ENCODE measurements at regions of chr1 and their contacts with region 1.

Region 1: DNA sequence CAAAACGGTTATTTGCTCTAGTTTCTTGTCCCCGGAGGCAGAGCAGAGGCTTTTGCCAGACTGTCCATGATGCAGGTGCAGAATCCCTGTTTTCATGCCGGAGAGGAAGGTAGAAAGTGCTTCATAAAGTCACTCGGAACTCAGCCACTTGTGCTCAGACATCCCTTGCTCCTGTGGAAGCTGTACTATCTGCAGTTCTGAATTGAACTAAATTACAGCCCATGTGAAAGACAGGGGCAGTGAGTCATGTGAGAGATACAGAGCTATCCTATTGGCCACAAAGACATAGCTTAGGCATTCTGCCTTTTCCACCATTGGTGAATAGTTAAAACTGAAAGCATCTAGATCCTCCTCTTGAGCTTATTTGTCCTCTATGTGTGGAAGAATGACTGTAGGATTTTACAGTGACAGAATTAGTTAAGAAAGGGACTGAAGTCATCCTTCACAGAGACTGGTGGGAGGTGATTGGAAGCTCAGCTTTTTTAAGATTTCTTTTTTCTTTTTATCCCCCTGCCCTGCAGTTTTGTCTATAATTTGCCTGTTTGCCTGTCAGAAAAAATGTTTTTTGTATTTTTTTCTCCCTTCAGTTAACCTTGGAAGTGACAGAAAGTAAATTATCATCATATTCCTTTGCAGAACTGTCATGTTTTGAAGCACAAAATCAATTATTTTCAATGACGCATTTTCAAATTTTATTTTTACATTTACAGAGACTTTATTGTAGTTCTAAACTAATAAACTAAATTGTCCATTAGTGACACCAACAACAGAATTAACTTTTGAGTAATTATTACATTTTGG is 298.6 kb downstream of the PTPRC start:
- DNase-seq: peak; percentile 91
- H3K4me3 ChIP-seq: peak overlapping the region; percentile 68 to 80 (median 79)
- H3K27ac ChIP-seq: peak overlapping the region; percentile 81
- H3K4me1 ChIP-seq: no peaks in the 10 kb centered on the region
- H3K27me3 ChIP-seq: no peaks in the 10 kb centered on the region
- CTCF ChIP-seq: no peak

Region 2: GRCh38 chr1:198829944-198830343 is 107.5 kb before region 1 on chr1:
- CTCF ChIA-PET with region 1: no interaction called
- dilution Hi-C with region 1: no loop called
- in situ Hi-C with region 1: no loop called
- intact Hi-C with region 1: loop called (anchors 5 kb)
- DNase-seq: no peak
- H3K4me3 ChIP-seq: no peak overlapping the region
- H3K27ac ChIP-seq: no peak overlapping the region
- H3K4me1 ChIP-seq: no peaks in the 10 kb centered on the region
- H3K27me3 ChIP-seq: no peaks in the 10 kb centered on the region
- CTCF ChIP-seq: peak in 1 of 2 donors; percentile 1

Region 3: DNA sequence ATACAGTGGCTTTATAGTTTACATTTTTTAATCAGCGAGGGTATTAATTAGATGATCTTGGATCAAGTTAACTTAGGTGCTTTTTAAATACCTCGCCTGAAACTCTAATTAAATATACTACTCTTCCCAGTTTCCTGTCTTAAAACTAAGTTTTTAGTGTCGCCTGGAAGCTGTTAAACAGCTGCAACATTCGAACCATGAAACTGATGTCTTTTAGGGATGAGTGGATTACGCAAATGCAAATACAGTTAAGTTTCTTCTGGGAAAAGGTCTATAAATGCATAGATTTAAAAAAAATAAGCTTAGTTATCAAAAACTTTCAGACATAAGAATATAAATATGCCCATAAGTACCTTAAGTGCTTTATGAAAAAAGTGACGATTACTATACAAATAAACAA is 70.2 kb before region 1 on chr1:
- CTCF ChIA-PET with region 1: no interaction called
- dilution Hi-C with region 1: no loop called
- in situ Hi-C with region 1: no loop called
- intact Hi-C with region 1: no loop called
- DNase-seq: no peak
- H3K4me3 ChIP-seq: no peak overlapping the region
- H3K27ac ChIP-seq: no peak overlapping the region
- H3K4me1 ChIP-seq: no peaks in the 10 kb centered on the region
- H3K27me3 ChIP-seq: no peaks in the 10 kb centered on the region
- CTCF ChIP-seq: no peak

Region 4: GRCh38 chr1:198880818-198881597 is 56.4 kb before region 1 on chr1:
- CTCF ChIA-PET with region 1: no interaction called
- dilution Hi-C with region 1: no loop called
- in situ Hi-C with region 1: no loop called
- intact Hi-C with region 1: loop called (anchors 2 kb)
- DNase-seq: peak; percentile 87
- H3K4me3 ChIP-seq: no peak overlapping the region
- H3K27ac ChIP-seq: peak overlapping the region; percentile 58
- H3K4me1 ChIP-seq: peaks cover 8% of the 10 kb centered on the region
- H3K27me3 ChIP-seq: no peaks in the 10 kb centered on the region
- CTCF ChIP-seq: no peak

Region 5: GRCh38 chr1:198903203-198903602 is 34.2 kb before region 1 on chr1:
- CTCF ChIA-PET with region 1: interaction called, 3 read pairs
- dilution Hi-C with region 1: no loop called
- in situ Hi-C with region 1: no loop called
- intact Hi-C with region 1: loop called (anchors 1 kb)
- DNase-seq: peak; percentile 44
- H3K4me3 ChIP-seq: peak overlapping the region in 2 of 3 experiments; percentile 10 to 24
- H3K27ac ChIP-seq: peak overlapping the region; percentile 75
- H3K4me1 ChIP-seq: peaks cover 39% of the 10 kb centered on the region
- H3K27me3 ChIP-seq: no peaks in the 10 kb centered on the region
- CTCF ChIP-seq: no peak

Region 6: DNA sequence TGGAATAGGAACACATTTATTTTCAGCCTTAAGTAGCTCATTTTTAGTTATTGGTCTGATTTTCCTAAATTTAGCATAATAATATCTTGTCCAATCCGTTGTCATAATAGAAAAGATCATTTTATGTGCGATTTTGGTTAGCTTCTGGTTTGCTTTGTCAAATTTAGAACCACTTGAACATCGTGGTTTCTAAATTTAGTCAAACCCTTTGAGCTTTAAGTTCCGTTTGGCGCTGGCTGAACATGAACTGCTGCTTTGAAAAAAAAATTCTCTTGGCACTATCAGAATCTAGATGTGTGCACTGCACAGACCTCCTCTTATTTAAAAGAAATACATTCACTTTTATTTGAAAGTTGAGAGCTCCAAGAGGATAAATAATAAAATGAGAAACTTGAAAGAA is 72.0 kb after region 1 on chr1:
- CTCF ChIA-PET with region 1: no interaction called
- dilution Hi-C with region 1: no loop called
- in situ Hi-C with region 1: no loop called
- intact Hi-C with region 1: no loop called
- DNase-seq: no peak
- H3K4me3 ChIP-seq: no peak overlapping the region
- H3K27ac ChIP-seq: no peak overlapping the region
- H3K4me1 ChIP-seq: no peaks in the 10 kb centered on the region
- H3K27me3 ChIP-seq: no peaks in the 10 kb centered on the region
- CTCF ChIP-seq: no peak

Region 7: GRCh38 chr1:199243423-199244061 is 306.1 kb after region 1 on chr1:
- CTCF ChIA-PET with region 1: no interaction called
- dilution Hi-C with region 1: no loop called
- in situ Hi-C with region 1: no loop called
- intact Hi-C with region 1: loop called (anchors 10 kb)
- DNase-seq: peak; percentile 26
- H3K4me3 ChIP-seq: no peak overlapping the region
- H3K27ac ChIP-seq: no peak overlapping the region
- H3K4me1 ChIP-seq: no peaks in the 10 kb centered on the region
- H3K27me3 ChIP-seq: no peaks in the 10 kb centered on the region
- CTCF ChIP-seq: peak; percentile 62 to 78

Region 8: DNA sequence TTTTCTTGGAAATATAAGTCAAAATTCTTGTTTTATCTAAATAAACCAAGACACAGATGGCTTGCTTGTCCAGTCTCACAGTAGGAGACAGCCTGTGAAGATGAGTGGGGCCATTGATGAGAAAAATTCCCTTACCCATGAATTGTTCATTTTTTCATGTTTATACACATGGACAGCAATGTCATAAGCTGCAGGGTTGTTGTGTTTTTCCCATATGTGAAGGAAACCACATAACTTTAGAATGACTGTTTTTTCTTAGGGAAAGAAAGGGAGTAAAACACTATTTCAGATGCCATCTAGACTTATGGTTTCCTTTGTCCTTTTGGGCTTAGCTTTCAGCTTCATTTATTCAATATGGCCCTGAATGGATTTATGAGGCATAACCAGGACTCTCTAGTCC is 467.5 kb after region 1 on chr1:
- CTCF ChIA-PET with region 1: no interaction called
- dilution Hi-C with region 1: no loop called
- in situ Hi-C with region 1: no loop called
- intact Hi-C with region 1: no loop called
- DNase-seq: no peak
- H3K4me3 ChIP-seq: no peak overlapping the region
- H3K27ac ChIP-seq: no peak overlapping the region
- H3K4me1 ChIP-seq: no peaks in the 10 kb centered on the region
- H3K27me3 ChIP-seq: peaks cover 2% of the 10 kb centered on the region
- CTCF ChIP-seq: no peak

Measured in mammary epithelial cell (primary cell).